PC-9 (cell line): ENCODE measurements at regions of chr12 and their contacts with region 1.

Region 1: GRCh38 chr12:56636675-56637540 is 6.8 kb upstream of the BAZ2A start:
- DNase-seq: peak; percentile 98 to 99
- H3K4me3 ChIP-seq: peak overlapping the region; percentile 91
- H3K27ac ChIP-seq: peak overlapping the region; percentile 58
- H3K4me1 ChIP-seq: peaks cover 25% of the 10 kb centered on the region
- H3K27me3 ChIP-seq: no peaks in the 10 kb centered on the region
- CTCF ChIP-seq: peak; percentile 71

Region 2: DNA sequence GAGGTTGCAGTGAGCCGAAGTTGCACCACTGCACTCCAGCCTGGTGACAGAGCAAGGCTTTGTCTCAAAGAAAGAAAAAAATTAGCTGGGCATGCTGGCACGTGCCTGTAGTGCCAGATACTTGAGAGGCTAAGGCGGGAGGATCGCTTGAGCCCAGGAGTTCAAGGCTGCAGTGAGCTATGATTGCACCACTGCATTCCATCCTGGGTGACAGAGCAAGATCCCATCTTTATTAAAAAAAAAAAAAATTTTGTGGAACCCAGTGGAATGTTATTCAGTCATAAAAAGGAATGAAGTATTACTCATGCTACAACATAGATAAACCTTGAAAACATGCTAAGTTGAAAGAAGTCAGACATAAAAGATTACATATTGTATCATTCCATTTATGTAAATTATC is 565.3 kb before region 1 on chr12:
- CTCF ChIA-PET with region 1: no interaction called
- POLR2A ChIA-PET with region 1: no interaction called
- intact Hi-C with region 1: no loop called
- DNase-seq: peak in 1 of 2 experiments; percentile 58
- H3K4me3 ChIP-seq: no peak overlapping the region
- H3K27ac ChIP-seq: no peak overlapping the region
- H3K4me1 ChIP-seq: peaks cover 4% of the 10 kb centered on the region; the same call in 1 of the 2 replicates
- H3K27me3 ChIP-seq: no peaks in the 10 kb centered on the region
- CTCF ChIP-seq: no peak

Region 3: DNA sequence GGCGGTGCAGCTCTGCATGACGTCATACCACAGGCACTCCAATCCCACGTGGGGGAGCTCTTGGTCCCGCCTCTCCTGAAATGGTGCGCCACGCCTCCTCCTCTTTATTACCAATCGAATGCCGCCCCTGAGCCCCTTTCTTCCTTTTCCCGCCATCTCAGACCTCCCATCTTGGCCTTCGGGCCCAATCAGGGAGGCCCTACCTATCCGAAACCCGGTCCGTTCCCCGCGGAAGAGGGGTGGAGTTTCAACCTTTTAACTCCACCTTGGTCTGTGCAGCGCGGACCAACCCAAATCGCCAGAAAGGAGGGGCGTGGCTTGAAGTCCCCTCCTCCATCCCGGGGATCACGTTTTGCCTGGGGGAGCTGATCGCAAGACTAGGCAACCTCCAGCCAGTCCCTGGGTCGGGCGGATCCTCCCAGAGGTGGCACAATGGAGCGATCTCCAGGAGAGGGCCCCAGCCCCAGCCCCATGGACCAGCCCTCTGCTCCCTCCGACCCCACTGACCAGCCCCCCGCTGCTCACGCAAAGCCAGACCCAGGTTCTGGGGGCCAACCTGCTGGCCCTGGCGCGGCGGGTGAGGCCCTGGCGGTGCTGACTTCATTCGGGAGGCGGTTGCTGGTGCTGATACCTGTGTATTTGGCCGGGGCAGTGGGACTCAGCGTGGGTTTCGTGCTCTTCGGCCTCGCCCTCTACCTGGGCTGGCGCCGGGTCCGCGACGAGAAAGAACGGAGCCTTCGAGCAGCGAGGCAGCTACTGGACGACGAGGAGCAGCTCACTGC is 508.8 kb before region 1 on chr12 and contains the start of gene ESYT1:
- CTCF ChIA-PET with region 1: interaction called, 3 read pairs
- POLR2A ChIA-PET with region 1: no interaction called
- intact Hi-C with region 1: loop called (anchors 2 kb)
- DNase-seq: peak; percentile 98 to 99
- H3K4me3 ChIP-seq: peak within 1 kb of the TSS; percentile 77
- H3K27ac ChIP-seq: peak within 1 kb of the TSS; percentile 46; the same call in 1 of the 2 replicates
- H3K4me1 ChIP-seq: peaks cover 31% of the 10 kb centered on the region
- H3K27me3 ChIP-seq: no peaks in the 10 kb centered on the region
- CTCF ChIP-seq: no peak
- total RNA-seq, gene ESYT1: 46.1 and 52.2 TPM in 2 replicates

Region 4: GRCh38 chr12:56398324-56398723 is 238.6 kb before region 1 on chr12:
- CTCF ChIA-PET with region 1: no interaction called
- POLR2A ChIA-PET with region 1: no interaction called
- intact Hi-C with region 1: no loop called
- DNase-seq: no peak
- H3K4me3 ChIP-seq: no peak overlapping the region
- H3K27ac ChIP-seq: no peak overlapping the region
- H3K4me1 ChIP-seq: no peaks in the 10 kb centered on the region
- H3K27me3 ChIP-seq: no peaks in the 10 kb centered on the region; the same call in 1 of the 2 replicates
- CTCF ChIP-seq: no peak

Region 5: GRCh38 chr12:56521590-56522371 is 115.1 kb before region 1 on chr12 and contains the start of gene RBMS2:
- CTCF ChIA-PET with region 1: interaction called, 6 read pairs
- POLR2A ChIA-PET with region 1: interaction called, 13 read pairs
- intact Hi-C with region 1: no loop called
- DNase-seq: peak; percentile 76 to 82
- H3K4me3 ChIP-seq: peak within 1 kb of the TSS; percentile 80
- H3K27ac ChIP-seq: peak within 1 kb of the TSS; percentile 95
- H3K4me1 ChIP-seq: peaks cover 76% of the 10 kb centered on the region
- H3K27me3 ChIP-seq: no peaks in the 10 kb centered on the region
- CTCF ChIP-seq: no peak
- total RNA-seq, gene RBMS2: 44.7 and 81.8 TPM in 2 replicates

Region 6: GRCh38 chr12:56688129-56688845 is 51.4 kb after region 1 on chr12 and contains the start of gene PTGES3:
- CTCF ChIA-PET with region 1: interaction called, 7 read pairs
- POLR2A ChIA-PET with region 1: interaction called, 8 read pairs
- intact Hi-C with region 1: loop called (anchors 2 kb)
- DNase-seq: peak; percentile 92 to 97
- H3K4me3 ChIP-seq: peak within 1 kb of the TSS; percentile 97
- H3K27ac ChIP-seq: peak within 1 kb of the TSS; percentile 94
- H3K4me1 ChIP-seq: peaks cover 15% of the 10 kb centered on the region
- H3K27me3 ChIP-seq: no peaks in the 10 kb centered on the region
- CTCF ChIP-seq: no peak
- total RNA-seq, gene PTGES3: 227 and 322 TPM in 2 replicates

Region 7: DNA sequence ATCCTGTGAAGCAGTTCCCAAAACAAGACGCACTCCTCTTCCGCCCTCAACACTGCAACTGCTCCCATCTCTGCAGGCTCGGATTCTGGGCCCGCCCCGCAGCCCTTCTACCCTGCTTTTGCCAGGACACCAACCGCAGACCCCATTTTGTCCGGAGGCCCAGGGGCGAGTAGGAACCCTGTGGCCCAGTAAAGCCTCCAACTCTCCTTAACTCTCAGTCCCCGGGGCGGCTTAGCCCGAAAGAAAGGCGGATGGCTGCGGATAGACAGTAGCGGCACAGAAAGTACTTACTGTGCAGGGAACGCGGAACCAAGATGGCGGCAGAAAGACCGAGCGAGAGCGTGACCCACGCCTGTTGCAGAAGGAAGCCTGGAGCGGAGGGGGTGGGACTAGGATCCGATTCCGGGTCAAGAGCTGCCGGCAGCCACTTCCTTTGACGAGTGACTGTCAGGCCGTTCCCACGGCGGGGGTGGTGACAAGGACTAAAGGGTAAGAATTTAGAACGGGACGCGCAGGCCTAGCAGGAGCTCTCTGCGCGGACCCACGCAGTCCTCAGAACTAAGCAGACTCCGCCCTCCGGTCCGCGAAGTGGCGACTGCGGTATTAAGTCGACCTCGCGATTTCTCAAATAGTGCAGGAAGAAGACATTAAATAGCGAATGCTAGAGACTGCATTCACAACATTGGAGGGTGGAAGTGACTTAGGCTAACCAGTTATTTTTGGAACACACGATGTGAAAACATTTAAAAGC is 88.2 kb after region 1 on chr12 and contains the start of gene NACA:
- CTCF ChIA-PET with region 1: interaction called, 5 read pairs
- POLR2A ChIA-PET with region 1: interaction called, 9 read pairs
- intact Hi-C with region 1: loop called (anchors 2 kb)
- DNase-seq: peak; percentile 94 to 95
- H3K4me3 ChIP-seq: peak within 1 kb of the TSS; percentile 99
- H3K27ac ChIP-seq: peak within 1 kb of the TSS; percentile 94
- H3K4me1 ChIP-seq: peaks cover 39% of the 10 kb centered on the region
- H3K27me3 ChIP-seq: no peaks in the 10 kb centered on the region
- CTCF ChIP-seq: no peak
- total RNA-seq, gene NACA: 812 and 1,035 TPM in 2 replicates

Region 8: GRCh38 chr12:57005980-57006808 is 369.3 kb after region 1 on chr12 and contains the start of gene ZBTB39:
- CTCF ChIA-PET with region 1: interaction called, 3 read pairs
- POLR2A ChIA-PET with region 1: interaction called, 3 read pairs
- intact Hi-C with region 1: loop called (anchors 10 kb)
- DNase-seq: peak in 1 of 2 experiments; percentile 70
- H3K4me3 ChIP-seq: peak within 1 kb of the TSS; percentile 62
- H3K27ac ChIP-seq: no peak within 1 kb of the TSS
- H3K4me1 ChIP-seq: peaks cover 11% of the 10 kb centered on the region
- H3K27me3 ChIP-seq: no peaks in the 10 kb centered on the region
- CTCF ChIP-seq: peak; percentile 68; the same call in 1 of the 2 replicates
- total RNA-seq, gene ZBTB39: 6.5 and 7.6 TPM in 2 replicates